WTC11 (cell line): ENCODE measurements at regions of chr11 and their contacts with region 1.

Region 1: DNA sequence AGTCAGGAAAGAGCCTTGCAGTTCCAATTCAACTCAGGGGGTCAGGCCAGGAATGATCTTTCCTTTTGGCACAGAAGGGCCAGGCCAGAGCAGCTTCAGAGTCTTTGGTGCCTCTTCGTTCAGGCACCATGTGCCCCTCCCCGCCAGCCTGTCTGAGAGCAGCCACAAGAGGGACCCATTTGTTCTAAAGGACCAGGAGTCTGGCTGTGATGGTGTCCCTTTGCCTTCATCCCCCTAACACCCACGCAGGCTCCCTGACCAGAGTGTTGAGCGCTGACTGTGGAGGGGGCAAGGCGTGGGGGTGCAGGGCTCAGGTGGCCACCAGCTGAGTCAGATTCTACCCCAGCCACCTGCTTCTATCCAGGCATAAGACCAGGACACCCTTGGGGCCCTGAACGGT is 156.4 kb downstream of the TTC17 start:
- DNase-seq: peak; percentile 57
- ATAC-seq: peak; percentile 94
- H3K4me3 Mint-ChIP-seq: no peak overlapping the region
- H3K27ac Mint-ChIP-seq: no peak overlapping the region
- H3K4me1 Mint-ChIP-seq: 0 out of 2 replicates have a peak, but pooled peaks cover 3% of the 10 kb centered on the region
- H3K27me3 Mint-ChIP-seq: peaks cover 30% of the 10 kb centered on the region
- CTCF ChIP-seq: no peak

Region 2: DNA sequence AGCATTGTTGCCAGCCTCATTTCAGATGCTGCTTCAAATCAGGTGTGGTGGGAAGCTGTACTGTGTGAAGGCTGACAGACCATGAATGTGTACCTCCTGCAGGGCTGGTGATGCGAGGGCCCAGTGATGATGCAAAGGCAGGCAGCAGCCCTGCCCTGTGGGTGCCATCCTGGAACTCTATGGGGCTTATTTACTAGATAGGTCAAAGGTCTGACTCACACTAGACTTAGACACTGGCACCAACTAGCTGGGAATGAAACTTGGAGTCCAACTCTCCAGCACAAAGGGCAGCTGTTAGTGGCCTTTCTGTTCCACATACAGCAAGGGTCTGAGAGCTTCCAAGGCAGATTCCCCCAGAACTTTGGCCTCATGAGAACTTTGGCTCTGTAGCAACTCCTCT is 17.9 kb before region 1 on chr11:
- CTCF ChIA-PET with region 1: interaction called, 10 read pairs
- POLR2A ChIA-PET with region 1: interaction called, 5 read pairs
- DNase-seq: no peak
- ATAC-seq: peak; percentile 24; the same call in 1 of the 2 replicates
- H3K4me3 Mint-ChIP-seq: no peak overlapping the region
- H3K27ac Mint-ChIP-seq: no peak overlapping the region
- H3K4me1 Mint-ChIP-seq: no peaks in the 10 kb centered on the region
- H3K27me3 Mint-ChIP-seq: peaks cover 10% of the 10 kb centered on the region
- CTCF ChIP-seq: no peak

Region 3: GRCh38 chr11:43504316-43504950 is 10.7 kb before region 1 on chr11:
- CTCF ChIA-PET with region 1: interaction called, 53 read pairs
- POLR2A ChIA-PET with region 1: no interaction called
- DNase-seq: peak; percentile 44
- ATAC-seq: peak; percentile 91
- H3K4me3 Mint-ChIP-seq: no peak overlapping the region
- H3K27ac Mint-ChIP-seq: no peak overlapping the region
- H3K4me1 Mint-ChIP-seq: peaks cover 9% of the 10 kb centered on the region
- H3K27me3 Mint-ChIP-seq: peaks cover 10% of the 10 kb centered on the region
- CTCF ChIP-seq: no peak; the same call in 1 of the 2 replicates

Region 4: DNA sequence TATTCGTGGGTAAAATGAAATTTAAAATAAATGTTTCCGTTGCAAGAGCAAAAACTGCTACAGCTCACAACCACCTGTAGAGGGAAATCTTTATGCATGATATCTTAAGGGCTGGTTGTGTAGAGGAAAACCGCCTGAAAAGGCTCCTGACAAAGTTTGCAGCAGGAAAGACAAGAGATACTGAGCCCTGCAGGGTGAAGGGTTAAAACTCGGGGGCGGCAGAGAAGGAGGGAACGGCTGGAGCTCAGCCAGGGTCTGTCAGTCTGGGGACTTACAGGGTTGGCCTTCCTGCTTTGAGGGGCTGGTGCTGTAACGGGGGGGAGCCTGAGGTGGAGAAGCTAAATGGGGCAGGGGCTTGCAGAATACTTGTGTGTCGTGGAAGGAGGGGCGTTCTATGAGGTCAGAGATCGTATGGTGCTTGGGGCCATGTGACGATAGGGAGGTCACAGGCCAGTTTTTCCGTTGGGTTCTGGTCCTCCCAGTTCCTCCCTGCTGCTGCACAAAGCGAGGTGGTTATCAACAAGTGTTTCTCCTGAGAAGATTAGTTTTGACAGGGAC is 42.5 kb after region 1 on chr11:
- CTCF ChIA-PET with region 1: interaction called, 10 read pairs
- POLR2A ChIA-PET with region 1: no interaction called
- DNase-seq: no peak
- ATAC-seq: peak; percentile 63
- H3K4me3 Mint-ChIP-seq: peak overlapping the region; percentile 69
- H3K27ac Mint-ChIP-seq: no peak overlapping the region
- H3K4me1 Mint-ChIP-seq: peaks cover 58% of the 10 kb centered on the region
- H3K27me3 Mint-ChIP-seq: peaks cover 38% of the 10 kb centered on the region
- CTCF ChIP-seq: no peak

Region 5: DNA sequence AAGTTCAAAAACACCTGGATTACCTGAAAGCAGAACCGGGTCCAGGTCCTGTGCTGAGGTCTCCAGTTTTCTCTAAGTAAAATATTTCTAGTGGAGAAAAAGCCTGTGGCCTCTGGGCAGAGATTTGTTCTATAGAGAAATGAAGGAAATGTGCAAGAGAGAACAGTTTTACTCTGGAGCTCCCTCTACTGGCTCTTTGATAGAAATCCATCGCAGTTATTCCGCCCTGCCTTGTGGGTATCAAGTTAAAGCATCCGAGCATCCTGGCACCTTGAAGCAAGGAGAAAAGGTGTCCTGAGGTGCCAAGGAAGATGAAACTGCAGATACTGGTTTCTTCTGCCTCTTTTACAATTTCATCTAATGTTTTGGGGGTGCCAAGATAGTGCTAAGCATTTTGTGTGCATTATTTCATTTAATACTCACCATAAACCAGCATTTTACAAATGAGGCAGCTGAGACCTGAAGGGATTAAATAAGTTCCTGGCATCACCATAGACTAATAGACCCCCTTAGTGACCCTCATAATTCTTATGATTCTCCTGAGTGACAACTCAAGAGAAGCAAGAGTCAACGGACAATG is 52.4 kb after region 1 on chr11:
- CTCF ChIA-PET with region 1: interaction called, 302 read pairs
- POLR2A ChIA-PET with region 1: interaction called, 3 read pairs
- DNase-seq: no peak
- ATAC-seq: peak; percentile 88
- H3K4me3 Mint-ChIP-seq: no peak overlapping the region
- H3K27ac Mint-ChIP-seq: no peak overlapping the region
- H3K4me1 Mint-ChIP-seq: no peaks in the 10 kb centered on the region
- H3K27me3 Mint-ChIP-seq: peaks cover 57% of the 10 kb centered on the region
- CTCF ChIP-seq: peak; percentile 61; the same call in 1 of the 2 replicates

Region 6: DNA sequence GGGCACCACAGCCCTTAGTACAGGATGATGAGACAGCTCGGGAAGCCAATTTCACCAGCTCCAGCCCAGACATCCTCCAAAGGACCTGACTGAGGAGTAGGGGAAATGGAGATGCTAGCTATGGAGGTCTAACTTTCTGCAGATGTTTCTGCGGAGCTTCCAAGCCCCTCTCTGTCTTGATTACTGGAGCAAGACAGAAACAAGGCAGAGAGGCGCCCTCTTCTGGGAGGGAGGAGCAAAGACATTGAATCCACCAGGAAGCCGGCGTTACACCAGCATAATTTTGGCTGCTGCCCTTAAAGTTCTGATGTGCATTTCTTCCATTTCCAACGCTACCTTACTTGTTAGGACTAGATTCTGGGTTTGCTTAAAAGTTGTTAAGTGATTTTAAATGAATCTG is 58.1 kb after region 1 on chr11:
- CTCF ChIA-PET with region 1: interaction called, 302 read pairs
- POLR2A ChIA-PET with region 1: no interaction called
- DNase-seq: peak; percentile 64
- ATAC-seq: peak; percentile 53
- H3K4me3 Mint-ChIP-seq: no peak overlapping the region
- H3K27ac Mint-ChIP-seq: no peak overlapping the region
- H3K4me1 Mint-ChIP-seq: peaks cover 32% of the 10 kb centered on the region
- H3K27me3 Mint-ChIP-seq: peaks cover 100% of the 10 kb centered on the region
- CTCF ChIP-seq: peak; percentile 57; the same call in 1 of the 2 replicates

Region 7: GRCh38 chr11:43614214-43614613 is 99.1 kb after region 1 on chr11:
- CTCF ChIA-PET with region 1: no interaction called
- POLR2A ChIA-PET with region 1: no interaction called
- DNase-seq: no peak
- ATAC-seq: no peak
- H3K4me3 Mint-ChIP-seq: no peak overlapping the region
- H3K27ac Mint-ChIP-seq: no peak overlapping the region
- H3K4me1 Mint-ChIP-seq: no peaks in the 10 kb centered on the region
- H3K27me3 Mint-ChIP-seq: peaks cover 31% of the 10 kb centered on the region
- CTCF ChIP-seq: no peak